Naive thymus-derived CD4-positive, alpha-beta T cell (primary cell): ENCODE measurements at regions of chr7 and their contacts with region 1.

Region 1: GRCh38 chr7:151017953-151018420 is 6.3 kb downstream of the ATG9B start:
- DNase-seq: peak; percentile 67 to 87 (median 75)
- ATAC-seq: peak; percentile 68
- H3K4me3 ChIP-seq: peak overlapping the region; percentile 65
- H3K4me3 Mint-ChIP-seq: peak overlapping the region; percentile 79 to 94 (median 88)
- H3K27ac ChIP-seq: peak overlapping the region; percentile 97
- H3K27ac Mint-ChIP-seq: peak overlapping the region; percentile 82 to 100 (median 94)
- H3K4me1 ChIP-seq: peaks cover 30 to 55% of the 10 kb centered on the region in 2 donors
- H3K4me1 Mint-ChIP-seq: peaks cover 35 to 67% (median 53%) of the 10 kb centered on the region in 7 donors
- H3K27me3 ChIP-seq: no peaks in the 10 kb centered on the region
- H3K27me3 Mint-ChIP-seq: peaks cover 0 to 35% (median 0%) of the 10 kb centered on the region in 5 donors

Region 2: GRCh38 chr7:150322833-150323681 is 694.9 kb before region 1 on chr7 and contains the starts of genes ACTR3C and LRRC61:
- CTCF ChIA-PET with region 1: no interaction called
- POLR2A ChIA-PET with region 1: no interaction called
- intact Hi-C with region 1: loop called in 1 of 2 experiments (anchors 5 kb)
- DNase-seq: peak; percentile 23 to 75 (median 41)
- ATAC-seq: peak; percentile 67
- H3K4me3 ChIP-seq: peak within 1 kb of the TSS; percentile 95
- H3K4me3 Mint-ChIP-seq: peak within 1 kb of the TSS; percentile 88 to 100 (median 98)
- H3K27ac ChIP-seq: peak within 1 kb of the TSS; percentile 85
- H3K27ac Mint-ChIP-seq: peak within 1 kb of the TSS; percentile 94 to 99 (median 98)
- H3K4me1 ChIP-seq: peaks cover 5 to 21% of the 10 kb centered on the region in 2 donors
- H3K4me1 Mint-ChIP-seq: peaks cover 25 to 57% (median 44%) of the 10 kb centered on the region in 7 donors
- H3K27me3 ChIP-seq: no peaks in the 10 kb centered on the region
- H3K27me3 Mint-ChIP-seq: no peaks in the 10 kb centered on the region
- total RNA-seq, gene ACTR3C: 7.0 to 13.2 (median 10.6) TPM
- total RNA-seq, gene LRRC61: 8.3 to 30.0 (median 11.5) TPM

Region 3: DNA sequence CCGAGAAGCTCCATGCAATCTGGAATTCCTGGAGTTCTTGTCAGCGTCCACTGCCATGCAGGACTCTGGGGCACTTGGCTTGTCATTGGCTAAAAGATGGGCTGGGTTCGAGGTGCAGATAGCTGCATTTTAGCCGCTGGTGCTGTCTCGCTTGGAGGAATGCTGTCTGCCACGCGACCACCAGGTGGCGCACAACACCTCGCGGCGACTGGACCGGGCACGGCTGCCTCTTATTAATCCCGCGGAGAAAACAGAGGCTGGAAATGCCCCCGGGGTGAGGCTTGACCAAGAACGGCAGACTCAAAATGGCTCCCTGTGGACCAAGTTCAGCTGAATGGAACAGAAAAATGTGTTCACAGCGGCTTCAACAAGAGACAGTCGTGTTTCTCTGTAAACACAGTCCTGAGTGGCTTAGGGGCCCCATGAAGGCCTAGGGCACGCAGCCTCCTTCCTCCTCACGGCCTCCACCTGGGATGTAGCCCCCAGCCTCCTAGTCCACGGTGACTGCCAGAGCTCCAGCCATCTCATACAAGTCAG is 119.4 kb before region 1 on chr7:
- CTCF ChIA-PET with region 1: interaction called, 3 read pairs
- POLR2A ChIA-PET with region 1: interaction called, 4 read pairs
- intact Hi-C with region 1: loop called (anchors 1 kb)
- DNase-seq: peak; percentile 44 to 81 (median 70)
- ATAC-seq: peak; percentile 84
- H3K4me3 ChIP-seq: no peak overlapping the region
- H3K4me3 Mint-ChIP-seq: peak overlapping the region in 1 of 10 donors; percentile 19
- H3K27ac ChIP-seq: no peak overlapping the region
- H3K27ac Mint-ChIP-seq: peak overlapping the region in 1 of 9 donors; percentile 34
- H3K4me1 ChIP-seq: no peaks in the 10 kb centered on the region
- H3K4me1 Mint-ChIP-seq: peaks cover 0 to 11% (median 5%) of the 10 kb centered on the region in 7 donors
- H3K27me3 ChIP-seq: no peaks in the 10 kb centered on the region
- H3K27me3 Mint-ChIP-seq: peaks cover 32 to 66% (median 60%) of the 10 kb centered on the region in 5 donors

Region 4: DNA sequence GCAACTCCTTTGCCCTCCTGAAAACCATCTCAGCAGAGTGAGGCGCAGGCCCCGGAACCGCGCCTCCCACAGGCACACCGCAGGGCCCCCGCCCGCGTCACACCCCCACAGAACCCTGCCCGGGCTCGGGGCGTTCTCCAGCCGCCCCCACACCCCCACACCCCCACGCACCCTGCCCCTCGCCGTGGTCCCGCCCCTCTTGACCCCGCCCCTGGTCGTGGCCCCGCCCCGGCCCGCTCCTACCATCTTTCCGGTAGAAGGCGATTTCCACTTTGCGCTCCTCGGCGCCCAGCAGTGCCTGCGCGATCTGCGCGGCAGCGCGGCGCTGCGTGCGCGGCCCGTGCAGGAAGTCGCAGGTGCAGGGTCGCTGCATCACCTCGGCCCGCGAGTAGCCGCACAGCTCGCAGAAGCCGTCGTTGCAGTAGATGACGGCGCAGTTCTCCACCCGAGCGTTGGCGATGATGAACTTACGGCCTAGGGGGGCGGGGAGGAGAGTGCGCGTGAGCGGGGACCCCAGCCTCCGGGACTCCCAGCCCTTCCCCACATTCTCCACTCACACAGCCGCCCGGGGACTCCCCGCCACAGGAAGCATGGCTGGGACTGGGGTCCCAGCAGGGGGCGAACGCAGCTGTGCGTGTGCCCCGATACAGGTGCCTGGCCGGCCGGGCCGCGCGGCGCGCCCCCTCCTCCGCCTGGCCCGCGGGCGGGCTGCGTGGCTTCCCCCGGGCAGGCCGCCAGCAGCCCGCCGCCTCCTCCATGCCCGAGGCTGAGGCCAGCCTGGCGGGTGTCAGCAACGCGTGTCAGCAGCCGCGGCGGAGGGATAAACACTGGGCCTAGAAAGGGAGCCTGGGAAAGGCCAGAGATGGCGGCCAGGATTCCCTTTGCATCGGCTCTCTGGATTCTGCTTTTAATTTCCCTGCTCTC is 43.3 kb before region 1 on chr7:
- CTCF ChIA-PET with region 1: interaction called, 12 read pairs
- POLR2A ChIA-PET with region 1: interaction called, 34 read pairs
- intact Hi-C with region 1: loop called (anchors 1 to 2 kb)
- DNase-seq: peak; percentile 63 to 84 (median 80)
- ATAC-seq: peak; percentile 85
- H3K4me3 ChIP-seq: peak overlapping the region; percentile 63
- H3K4me3 Mint-ChIP-seq: peak overlapping the region; percentile 85 to 92 (median 88)
- H3K27ac ChIP-seq: peak overlapping the region; percentile 73
- H3K27ac Mint-ChIP-seq: peak overlapping the region; percentile 59 to 97 (median 95)
- H3K4me1 ChIP-seq: peaks cover 20 to 47% of the 10 kb centered on the region in 2 donors
- H3K4me1 Mint-ChIP-seq: peaks cover 33 to 62% (median 55%) of the 10 kb centered on the region in 7 donors
- H3K27me3 ChIP-seq: peaks cover 7 to 13% of the 10 kb centered on the region in 2 donors
- H3K27me3 Mint-ChIP-seq: peaks cover 9 to 36% (median 25%) of the 10 kb centered on the region in 5 donors

Region 5: GRCh38 chr7:150994141-150994964 is 23.6 kb before region 1 on chr7:
- CTCF ChIA-PET with region 1: interaction called, 15 read pairs
- POLR2A ChIA-PET with region 1: interaction called, 33 read pairs
- intact Hi-C with region 1: loop called (anchors 1 to 2 kb)
- DNase-seq: peak in 2 of 9 donors; percentile 33 to 37
- ATAC-seq: peak; percentile 65
- H3K4me3 ChIP-seq: peak overlapping the region; percentile 29
- H3K4me3 Mint-ChIP-seq: peak overlapping the region; percentile 21 to 75 (median 64)
- H3K27ac ChIP-seq: peak overlapping the region; percentile 68
- H3K27ac Mint-ChIP-seq: peak overlapping the region; percentile 31 to 87 (median 63)
- H3K4me1 ChIP-seq: peaks cover 3 to 51% of the 10 kb centered on the region in 2 donors
- H3K4me1 Mint-ChIP-seq: peaks cover 19 to 60% (median 44%) of the 10 kb centered on the region in 7 donors
- H3K27me3 ChIP-seq: no peaks in the 10 kb centered on the region
- H3K27me3 Mint-ChIP-seq: peaks cover 0 to 3% (median 0%) of the 10 kb centered on the region in 5 donors

Region 6: DNA sequence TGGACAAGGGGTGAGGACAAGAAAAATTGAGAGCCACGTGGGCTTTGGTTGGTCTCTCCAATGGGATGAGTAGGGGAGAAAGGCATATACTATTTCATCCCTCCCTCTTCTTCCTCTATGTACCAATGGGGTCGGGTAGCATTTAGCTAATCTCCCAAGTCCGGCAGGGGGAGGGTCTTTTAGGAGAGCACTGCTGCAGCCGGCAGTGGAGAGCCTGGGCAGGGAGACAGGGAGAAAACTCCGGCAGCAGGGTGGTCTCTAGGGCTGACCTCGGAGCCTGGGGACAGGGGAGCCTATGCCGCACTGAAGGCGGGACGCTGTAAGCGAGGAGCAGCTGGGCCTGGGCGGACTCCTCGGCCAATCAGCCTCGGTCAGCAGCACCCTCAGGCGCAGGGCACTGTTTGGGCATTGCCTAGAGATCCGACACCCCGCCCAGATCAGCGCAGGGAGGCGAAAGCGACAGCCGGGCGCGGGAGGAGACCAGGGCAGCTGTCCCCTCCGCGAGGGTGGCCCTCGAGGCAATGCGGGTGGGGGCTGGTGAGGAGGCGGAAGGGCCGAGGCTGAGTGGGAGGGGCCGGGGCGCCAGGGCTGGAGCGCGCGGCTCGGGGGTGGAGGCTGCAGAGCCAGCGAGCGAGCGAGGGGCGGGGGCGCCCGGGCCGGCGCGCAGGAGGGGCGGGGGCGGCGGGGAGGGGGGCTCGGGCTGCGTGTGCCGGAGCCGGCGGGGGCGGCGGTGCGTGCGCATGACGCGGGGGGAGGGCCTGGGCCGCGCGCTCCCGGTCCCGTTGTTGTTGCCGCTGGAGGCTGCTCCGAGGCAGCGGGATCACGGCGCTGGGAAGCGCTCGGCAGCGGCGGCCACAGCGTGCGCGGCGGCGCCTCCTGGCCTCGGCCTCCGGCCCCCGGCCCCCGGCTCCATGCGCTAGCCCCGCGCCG is 68.0 kb after region 1 on chr7 and contains the start of gene AGAP3:
- CTCF ChIA-PET with region 1: interaction called, 4 read pairs
- POLR2A ChIA-PET with region 1: interaction called, 6 read pairs
- intact Hi-C with region 1: loop called (anchors 1 to 2 kb)
- DNase-seq: peak; percentile 41 to 75 (median 50)
- ATAC-seq: peak; percentile 23
- H3K4me3 ChIP-seq: peak within 1 kb of the TSS; percentile 68
- H3K4me3 Mint-ChIP-seq: peak within 1 kb of the TSS; percentile 87 to 97 (median 92)
- H3K27ac ChIP-seq: peak within 1 kb of the TSS; percentile 68
- H3K27ac Mint-ChIP-seq: peak within 1 kb of the TSS; percentile 56 to 96 (median 87)
- H3K4me1 ChIP-seq: peaks cover 36 to 41% of the 10 kb centered on the region in 2 donors
- H3K4me1 Mint-ChIP-seq: peaks cover 31 to 55% (median 41%) of the 10 kb centered on the region in 7 donors
- H3K27me3 ChIP-seq: no peaks in the 10 kb centered on the region
- H3K27me3 Mint-ChIP-seq: peaks cover 0 to 14% (median 0%) of the 10 kb centered on the region in 5 donors
- total RNA-seq, gene AGAP3: 27.4 to 70.6 (median 37.2) TPM